ENCODE measurements at regions of chr22 and their contacts with region 1.

Region 1: GRCh38 chr22:24244101-24244787 is 638 bp downstream of the GGT5 start:
- DNase-seq: peak; percentile 30
- H3K4me3 ChIP-seq: no peak overlapping the region
- H3K27ac ChIP-seq: no peak overlapping the region
- H3K4me1 ChIP-seq: peaks cover 22% of the 10 kb centered on the region
- CTCF ChIP-seq: no peak

Region 2: GRCh38 chr22:23984430-23984829 is 259.8 kb before region 1 on chr22:
- CTCF ChIA-PET with region 1: no interaction called
- POLR2A ChIA-PET with region 1: no interaction called
- intact Hi-C with region 1: loop called (anchors 10 kb)
- DNase-seq: peak; percentile 64
- H3K4me3 ChIP-seq: no peak overlapping the region
- H3K27ac ChIP-seq: no peak overlapping the region
- H3K4me1 ChIP-seq: no peaks in the 10 kb centered on the region
- CTCF ChIP-seq: peak; percentile 70

Region 3: GRCh38 chr22:24189249-24190158 is 54.7 kb before region 1 on chr22:
- CTCF ChIA-PET with region 1: no interaction called
- POLR2A ChIA-PET with region 1: no interaction called
- intact Hi-C with region 1: loop called (anchors 2 kb)
- DNase-seq: peak; percentile 59
- H3K4me3 ChIP-seq: no peak overlapping the region
- H3K27ac ChIP-seq: no peak overlapping the region
- H3K4me1 ChIP-seq: no peaks in the 10 kb centered on the region
- CTCF ChIP-seq: peak; percentile 82